T-cell (primary cell): ENCODE measurements at regions of chr1 and their contacts with region 1.

Region 1: GRCh38 chr1:2398871-2399270 is 7.2 kb downstream of the RER1 start:
- DNase-seq: no peak
- ATAC-seq: no peak
- H3K4me3 ChIP-seq: no peak overlapping the region
- H3K4me3 Mint-ChIP-seq: no peak overlapping the region
- H3K27ac ChIP-seq: no peak overlapping the region
- H3K27ac Mint-ChIP-seq: peak overlapping the region in 1 of 2 donors; percentile 55
- H3K4me1 ChIP-seq: peaks cover 4 to 20% of the 10 kb centered on the region in 2 experiments
- H3K4me1 Mint-ChIP-seq: peaks cover 25 to 40% (median 36%) of the 10 kb centered on the region in 3 donors
- H3K27me3 ChIP-seq: no peaks in the 10 kb centered on the region
- H3K27me3 Mint-ChIP-seq: no peaks in the 10 kb centered on the region

Region 2: GRCh38 chr1:2210786-2211185 is 188.1 kb before region 1 on chr1:
- CTCF ChIA-PET with region 1: no interaction called
- POLR2A ChIA-PET with region 1: interaction called in 1 of 2 experiments, 12 read pairs
- DNase-seq: no peak
- ATAC-seq: no peak
- H3K4me3 ChIP-seq: no peak overlapping the region
- H3K4me3 Mint-ChIP-seq: no peak overlapping the region
- H3K27ac ChIP-seq: no peak overlapping the region
- H3K27ac Mint-ChIP-seq: no peak overlapping the region
- H3K4me1 ChIP-seq: peaks cover 5 to 25% of the 10 kb centered on the region in 2 experiments
- H3K4me1 Mint-ChIP-seq: peaks cover 0 to 18% (median 6%) of the 10 kb centered on the region in 3 donors
- H3K27me3 ChIP-seq: peaks cover 0 to 34% of the 10 kb centered on the region in 2 experiments
- H3K27me3 Mint-ChIP-seq: no peaks in the 10 kb centered on the region